ENCODE measurements at regions of chr18 and their contacts with region 1.

Region 1: GRCh38 chr18:24734058-24734457 is 273.6 kb downstream of the HRH4 start:
- DNase-seq: no peak
- ATAC-seq: no peak
- H3K4me3 ChIP-seq: no peak overlapping the region
- H3K27ac ChIP-seq: no peak overlapping the region
- H3K4me1 ChIP-seq: no peaks in the 10 kb centered on the region
- H3K27me3 ChIP-seq: no peaks in the 10 kb centered on the region
- CTCF ChIP-seq: no peak
- POLR2A ChIP-seq: no peak

Region 2: GRCh38 chr18:24227977-24228666 is 505.9 kb before region 1 on chr18:
- in situ Hi-C with region 1: no loop called
- intact Hi-C with region 1: no loop called
- DNase-seq: no peak
- ATAC-seq: no peak
- H3K4me3 ChIP-seq: no peak overlapping the region
- H3K27ac ChIP-seq: no peak overlapping the region
- H3K4me1 ChIP-seq: peaks cover 51 to 65% of the 10 kb centered on the region in 2 donors
- H3K27me3 ChIP-seq: no peaks in the 10 kb centered on the region
- CTCF ChIP-seq: no peak
- POLR2A ChIP-seq: no peak

Region 3: GRCh38 chr18:24426398-24427294 is 307.4 kb before region 1 on chr18 and contains the start of gene IMPACT:
- in situ Hi-C with region 1: no loop called
- intact Hi-C with region 1: no loop called
- DNase-seq: peak; percentile 50 to 64
- ATAC-seq: peak; percentile 91 to 93
- H3K4me3 ChIP-seq: peak within 1 kb of the TSS; percentile 69 to 92 (median 80)
- H3K27ac ChIP-seq: peak within 1 kb of the TSS; percentile 46 to 81 (median 72)
- H3K4me1 ChIP-seq: peaks cover 7 to 11% of the 10 kb centered on the region in 2 donors
- H3K27me3 ChIP-seq: peaks cover 12 to 37% (median 15%) of the 10 kb centered on the region in 3 donors
- CTCF ChIP-seq: no peak
- POLR2A ChIP-seq: peak; percentile 30
- total RNA-seq, gene IMPACT: 9.1 to 18.7 (median 11.9) TPM

Region 4: GRCh38 chr18:24600076-24600654 is 133.9 kb before region 1 on chr18:
- in situ Hi-C with region 1: loop called (anchors 5 to 10 kb)
- intact Hi-C with region 1: no loop called
- DNase-seq: no peak
- ATAC-seq: no peak
- H3K4me3 ChIP-seq: no peak overlapping the region
- H3K27ac ChIP-seq: no peak overlapping the region
- H3K4me1 ChIP-seq: no peaks in the 10 kb centered on the region
- H3K27me3 ChIP-seq: no peaks in the 10 kb centered on the region
- CTCF ChIP-seq: peak in 4 of 5 experiments; percentile 24 to 56 (median 36)
- POLR2A ChIP-seq: no peak

Region 5: GRCh38 chr18:24786027-24786426 is 52.0 kb after region 1 on chr18:
- in situ Hi-C with region 1: no loop called
- intact Hi-C with region 1: no loop called
- DNase-seq: no peak
- ATAC-seq: no peak
- H3K4me3 ChIP-seq: no peak overlapping the region
- H3K27ac ChIP-seq: no peak overlapping the region
- H3K4me1 ChIP-seq: no peaks in the 10 kb centered on the region
- H3K27me3 ChIP-seq: no peaks in the 10 kb centered on the region
- CTCF ChIP-seq: no peak
- POLR2A ChIP-seq: no peak

Region 6: GRCh38 chr18:25490316-25490715 is 756.3 kb after region 1 on chr18:
- in situ Hi-C with region 1: no loop called
- intact Hi-C with region 1: no loop called
- DNase-seq: no peak
- ATAC-seq: no peak
- H3K4me3 ChIP-seq: no peak overlapping the region
- H3K27ac ChIP-seq: no peak overlapping the region
- H3K4me1 ChIP-seq: no peaks in the 10 kb centered on the region
- H3K27me3 ChIP-seq: no peaks in the 10 kb centered on the region
- CTCF ChIP-seq: no peak
- POLR2A ChIP-seq: no peak

Measured in gastrocnemius medialis (tissue), 4 donors.